ENCODE measurements at regions of chr2 and their contacts with region 1.

Region 1: GRCh38 chr2:70919672-70920366 is 15.9 kb upstream of the ATP6V1B1 start:
- DNase-seq: peak; percentile 43
- H3K4me3 ChIP-seq: no peak overlapping the region
- H3K27ac ChIP-seq: no peak overlapping the region
- H3K4me1 ChIP-seq: no peaks in the 10 kb centered on the region
- CTCF ChIP-seq: peak; percentile 90

Region 2: DNA sequence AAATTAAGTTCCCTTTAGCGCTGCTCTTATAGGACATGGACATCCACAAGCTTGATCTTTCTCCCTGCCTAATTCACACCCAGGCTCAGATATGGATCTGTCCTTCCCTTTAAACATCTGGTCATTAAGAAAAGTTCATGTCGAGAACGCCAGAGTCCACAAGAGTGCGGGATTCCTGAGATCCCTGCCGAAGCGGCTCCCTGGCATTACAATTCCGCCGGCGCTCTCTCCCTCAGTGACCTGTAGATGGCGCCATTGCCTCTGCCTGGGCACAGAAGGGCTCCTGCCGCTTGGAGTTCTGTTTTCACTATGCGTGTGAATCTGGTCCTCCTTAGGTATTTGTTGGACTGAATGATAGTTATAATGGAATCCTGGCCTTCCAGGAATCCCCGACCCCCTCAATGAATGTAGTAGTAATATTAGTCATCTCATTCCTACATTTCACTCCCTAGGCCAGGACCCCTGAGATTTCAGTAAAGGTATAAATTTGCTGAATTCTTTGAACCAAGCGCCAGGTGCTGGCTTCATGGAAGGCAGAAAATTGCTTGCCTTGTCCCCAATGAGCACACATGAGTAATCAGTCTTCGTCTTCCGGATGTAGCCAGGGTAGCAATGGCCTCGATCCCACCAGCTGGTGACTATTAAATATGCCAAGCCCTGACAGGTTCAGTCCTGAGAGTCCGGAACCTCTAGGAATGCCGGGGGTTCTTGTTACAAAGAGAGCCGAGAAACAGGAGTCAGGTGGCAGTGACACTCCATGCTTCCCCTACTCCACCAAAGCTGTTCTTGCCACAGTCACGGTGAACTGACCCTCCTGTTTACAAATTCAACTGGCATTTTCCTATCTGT is 57.8 kb before region 1 on chr2:
- CTCF ChIA-PET with region 1: no interaction called
- POLR2A ChIA-PET with region 1: no interaction called
- intact Hi-C with region 1: loop called (anchors 2 kb)
- DNase-seq: peak; percentile 59
- H3K4me3 ChIP-seq: no peak overlapping the region
- H3K27ac ChIP-seq: no peak overlapping the region
- H3K4me1 ChIP-seq: no peaks in the 10 kb centered on the region
- CTCF ChIP-seq: peak; percentile 97

Region 3: GRCh38 chr2:70890466-70891065 is 29.3 kb before region 1 on chr2:
- CTCF ChIA-PET with region 1: no interaction called
- POLR2A ChIA-PET with region 1: no interaction called
- intact Hi-C with region 1: no loop called
- DNase-seq: no peak
- H3K4me3 ChIP-seq: no peak overlapping the region
- H3K27ac ChIP-seq: no peak overlapping the region
- H3K4me1 ChIP-seq: no peaks in the 10 kb centered on the region
- CTCF ChIP-seq: no peak

Measured in OCI-LY7 (cell line).